T-cell (primary cell): ENCODE measurements at regions of chr4 and their contacts with region 1.

Region 1: GRCh38 chr4:60562334-60562733 is 637.8 kb upstream of the ADGRL3 start:
- DNase-seq: no peak
- ATAC-seq: no peak
- H3K4me3 ChIP-seq: no peak overlapping the region
- H3K4me3 Mint-ChIP-seq: no peak overlapping the region
- H3K27ac ChIP-seq: no peak overlapping the region
- H3K27ac Mint-ChIP-seq: no peak overlapping the region
- H3K4me1 ChIP-seq: no peaks in the 10 kb centered on the region
- H3K4me1 Mint-ChIP-seq: no peaks in the 10 kb centered on the region
- H3K27me3 ChIP-seq: no peaks in the 10 kb centered on the region
- H3K27me3 Mint-ChIP-seq: no peaks in the 10 kb centered on the region

Region 2: DNA sequence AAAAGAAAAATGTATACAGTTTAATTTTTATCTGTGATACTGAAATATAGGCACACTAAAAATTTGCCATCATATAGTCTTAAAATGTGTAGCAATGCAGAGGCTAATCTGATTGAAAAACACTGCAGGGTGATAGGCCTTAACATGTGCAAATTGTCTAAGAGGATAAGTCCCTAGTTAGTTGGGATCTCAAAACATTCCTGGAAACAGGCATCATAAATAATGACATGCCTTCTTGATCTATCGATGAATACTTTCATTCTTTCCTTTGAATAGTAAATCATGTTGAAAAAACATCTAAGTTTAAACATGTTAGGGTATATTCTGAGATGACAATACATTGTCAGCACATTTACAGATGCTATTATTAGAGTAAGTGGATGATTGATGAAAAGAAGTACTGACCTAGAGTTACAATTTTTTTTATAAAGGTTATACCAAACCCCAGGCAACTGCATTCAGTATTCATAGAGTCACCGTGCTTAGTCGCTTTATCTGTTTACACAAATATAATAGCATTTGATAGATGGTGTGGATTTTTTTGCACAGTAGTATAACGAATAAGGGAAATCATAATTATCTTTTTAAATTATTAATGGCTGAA is 30.5 kb before region 1 on chr4:
- CTCF ChIA-PET with region 1: no interaction called
- POLR2A ChIA-PET with region 1: no interaction called
- DNase-seq: no peak
- ATAC-seq: no peak
- H3K4me3 ChIP-seq: no peak overlapping the region
- H3K4me3 Mint-ChIP-seq: no peak overlapping the region
- H3K27ac ChIP-seq: no peak overlapping the region
- H3K27ac Mint-ChIP-seq: no peak overlapping the region
- H3K4me1 ChIP-seq: no peaks in the 10 kb centered on the region
- H3K4me1 Mint-ChIP-seq: no peaks in the 10 kb centered on the region
- H3K27me3 ChIP-seq: no peaks in the 10 kb centered on the region
- H3K27me3 Mint-ChIP-seq: no peaks in the 10 kb centered on the region

Region 3: DNA sequence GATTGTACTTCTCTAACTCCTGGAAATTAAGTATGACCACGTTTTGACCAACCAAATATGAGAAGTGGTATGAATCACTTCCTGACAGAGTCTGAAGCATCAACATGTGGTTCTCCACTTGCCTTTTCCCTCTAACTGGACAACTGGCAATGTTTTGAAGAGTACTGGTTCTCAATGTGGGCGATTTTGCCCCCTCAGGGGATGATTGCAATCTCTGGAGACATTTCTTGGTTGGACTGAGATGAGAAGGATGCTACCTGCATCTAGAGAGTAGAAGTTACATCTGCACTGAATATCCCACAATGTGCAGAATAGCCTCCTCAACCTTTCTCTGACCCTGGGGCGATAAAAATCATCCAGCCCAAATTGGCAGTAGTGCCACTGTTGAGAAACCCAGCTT is 472.5 kb after region 1 on chr4:
- CTCF ChIA-PET with region 1: no interaction called
- POLR2A ChIA-PET with region 1: no interaction called
- DNase-seq: no peak
- ATAC-seq: no peak
- H3K4me3 ChIP-seq: no peak overlapping the region
- H3K4me3 Mint-ChIP-seq: no peak overlapping the region
- H3K27ac ChIP-seq: no peak overlapping the region
- H3K27ac Mint-ChIP-seq: no peak overlapping the region
- H3K4me1 ChIP-seq: no peaks in the 10 kb centered on the region
- H3K4me1 Mint-ChIP-seq: no peaks in the 10 kb centered on the region
- H3K27me3 ChIP-seq: no peaks in the 10 kb centered on the region
- H3K27me3 Mint-ChIP-seq: no peaks in the 10 kb centered on the region

Region 4: DNA sequence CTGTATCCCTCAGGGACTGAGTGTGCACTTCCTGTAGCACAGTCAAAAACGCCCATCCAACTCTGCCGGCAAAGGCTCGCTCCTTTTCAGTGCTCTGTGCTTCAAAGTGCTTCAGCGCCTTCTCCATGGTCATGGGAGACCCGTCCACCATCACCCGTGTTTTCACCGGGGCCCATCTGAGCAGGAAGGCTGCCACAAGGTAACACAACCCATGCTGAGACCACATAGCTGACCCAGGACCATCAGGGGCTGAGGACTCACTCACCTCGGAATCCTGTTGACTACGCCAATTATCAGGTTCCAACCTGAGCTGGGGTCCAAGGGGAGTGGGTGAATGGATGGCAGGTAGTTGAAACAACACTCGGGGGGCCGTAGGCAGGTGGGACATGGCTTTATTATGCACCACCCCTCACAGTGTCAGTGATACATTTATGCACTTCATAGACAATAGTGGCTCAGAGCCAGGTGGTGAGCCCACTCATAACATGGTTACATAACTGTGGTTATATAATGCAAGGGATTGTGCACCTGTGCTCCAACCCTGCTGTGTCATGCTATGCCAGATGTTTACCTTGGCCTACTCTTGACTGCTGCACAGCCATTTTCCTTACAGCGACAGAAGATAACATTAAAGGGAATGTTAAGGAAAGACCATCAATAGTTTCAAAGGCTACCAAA is 865.6 kb after region 1 on chr4:
- CTCF ChIA-PET with region 1: no interaction called
- POLR2A ChIA-PET with region 1: interaction called in 1 of 2 experiments, 12 read pairs
- DNase-seq: no peak
- ATAC-seq: no peak
- H3K4me3 ChIP-seq: no peak overlapping the region
- H3K4me3 Mint-ChIP-seq: no peak overlapping the region
- H3K27ac ChIP-seq: no peak overlapping the region
- H3K27ac Mint-ChIP-seq: no peak overlapping the region
- H3K4me1 ChIP-seq: no peaks in the 10 kb centered on the region
- H3K4me1 Mint-ChIP-seq: no peaks in the 10 kb centered on the region
- H3K27me3 ChIP-seq: no peaks in the 10 kb centered on the region
- H3K27me3 Mint-ChIP-seq: no peaks in the 10 kb centered on the region